ENCODE measurements at regions of chr3 and their contacts with region 1.

Region 1: GRCh38 chr3:39707314-39707909 is 102.0 kb upstream of the MYRIP start:
- DNase-seq: no peak
- H3K4me3 Mint-ChIP-seq: no peak overlapping the region
- H3K27ac Mint-ChIP-seq: no peak overlapping the region
- H3K4me1 Mint-ChIP-seq: no peaks in the 10 kb centered on the region
- H3K27me3 Mint-ChIP-seq: peaks cover 3% of the 10 kb centered on the region

Region 2: GRCh38 chr3:39724233-39724846 is 16.9 kb after region 1 on chr3:
- intact Hi-C with region 1: no loop called
- DNase-seq: no peak
- H3K4me3 Mint-ChIP-seq: no peak overlapping the region
- H3K27ac Mint-ChIP-seq: no peak overlapping the region
- H3K4me1 Mint-ChIP-seq: no peaks in the 10 kb centered on the region
- H3K27me3 Mint-ChIP-seq: no peaks in the 10 kb centered on the region

Region 3: DNA sequence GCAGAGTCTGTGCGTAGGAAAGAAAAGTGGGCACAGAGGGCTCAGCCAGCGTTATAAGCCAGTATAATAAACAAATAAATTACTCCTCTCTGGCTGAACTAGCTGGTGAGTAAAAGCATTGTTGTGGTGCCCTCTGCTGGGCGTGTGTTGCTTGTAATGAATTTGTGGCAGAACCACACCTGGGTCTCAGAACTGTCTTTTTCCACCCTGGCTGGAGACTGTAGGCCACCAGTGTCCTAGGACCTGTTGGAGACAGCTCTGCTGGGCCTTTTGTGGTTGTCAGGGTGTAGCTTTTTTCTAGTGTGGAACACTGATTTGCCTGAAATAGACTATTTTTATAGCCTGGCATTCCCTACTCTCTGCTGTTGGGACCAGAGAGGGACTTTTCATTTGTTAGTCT is 471.6 kb after region 1 on chr3:
- intact Hi-C with region 1: loop called (anchors 5 kb)
- DNase-seq: peak; percentile 31
- H3K4me3 Mint-ChIP-seq: no peak overlapping the region
- H3K27ac Mint-ChIP-seq: no peak overlapping the region
- H3K4me1 Mint-ChIP-seq: no peaks in the 10 kb centered on the region
- H3K27me3 Mint-ChIP-seq: no peaks in the 10 kb centered on the region

Region 4: DNA sequence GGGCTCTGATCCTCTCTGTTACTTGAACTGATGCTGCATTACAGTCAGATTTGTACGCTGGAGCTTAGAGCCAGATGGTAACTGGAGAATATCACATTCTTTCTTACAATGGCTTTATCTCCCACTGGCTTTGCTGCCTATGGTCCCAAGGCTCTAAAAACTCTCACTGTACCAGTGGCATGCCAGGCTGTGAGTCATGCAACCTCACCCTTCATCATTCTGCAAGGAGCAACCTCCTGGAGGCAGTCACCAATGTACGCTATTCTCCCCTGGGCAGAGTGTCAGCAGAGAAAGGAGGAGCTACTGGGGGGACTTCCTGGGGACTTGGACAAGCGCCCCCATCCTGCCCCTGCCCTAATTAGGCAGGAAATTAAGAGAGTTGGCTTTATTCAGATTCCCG is 504.2 kb after region 1 on chr3:
- intact Hi-C with region 1: no loop called
- DNase-seq: no peak
- H3K4me3 Mint-ChIP-seq: no peak overlapping the region
- H3K27ac Mint-ChIP-seq: no peak overlapping the region
- H3K4me1 Mint-ChIP-seq: no peaks in the 10 kb centered on the region
- H3K27me3 Mint-ChIP-seq: no peaks in the 10 kb centered on the region